Common myeloid progenitor, CD34-positive (primary cell): ENCODE measurements at regions of chr2 and their contacts with region 1.

Region 1: DNA sequence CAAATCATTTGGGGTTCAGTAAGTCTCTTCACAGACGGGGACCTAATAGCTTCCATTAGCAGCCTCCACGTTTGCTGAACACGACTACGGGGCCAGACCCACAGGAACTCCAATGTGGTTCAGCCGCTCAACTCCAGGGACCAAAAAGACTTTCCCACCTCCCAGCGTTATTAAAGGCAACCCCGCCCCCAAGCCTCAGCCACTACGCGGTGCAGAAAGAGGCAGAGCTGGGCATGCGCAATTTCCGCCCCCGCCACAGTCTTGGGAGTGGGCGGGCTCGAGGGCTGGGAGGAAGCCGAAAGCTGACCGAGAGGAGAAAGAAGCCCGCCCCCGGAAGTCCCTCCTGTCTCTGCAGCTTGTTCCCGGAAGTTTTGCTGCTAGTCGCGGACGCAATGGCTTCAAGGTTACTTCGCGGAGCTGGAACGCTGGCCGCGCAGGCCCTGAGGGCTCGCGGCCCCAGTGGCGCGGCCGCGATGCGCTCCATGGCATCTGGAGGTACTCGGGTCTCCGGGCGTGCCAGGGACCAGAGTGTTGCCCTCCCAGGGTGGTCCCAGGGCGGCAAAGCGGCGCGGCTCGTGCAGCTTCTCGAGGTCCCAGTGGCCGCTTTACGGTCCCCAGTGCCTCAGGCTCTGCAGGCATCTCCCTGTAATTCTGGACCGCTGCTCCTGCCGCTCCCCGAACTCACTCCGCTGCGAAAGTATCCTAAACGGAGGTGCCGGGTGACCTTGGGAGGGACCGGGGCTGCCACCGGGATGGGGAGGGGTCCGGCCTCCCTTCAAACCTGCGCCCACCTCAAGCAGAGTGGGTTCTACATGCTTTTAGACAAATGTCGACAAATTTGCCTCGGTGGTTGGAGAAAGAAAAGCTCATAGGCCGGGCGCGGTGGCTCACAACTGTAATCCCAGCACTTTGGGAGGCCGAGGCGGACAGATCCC is at the start of gene COX5B:
- DNase-seq: peak; percentile 97 to 99 (median 98)
- H3K4me3 ChIP-seq: peak within 1 kb of the TSS; percentile 74 to 99 (median 95)
- H3K27ac ChIP-seq: peak within 1 kb of the TSS; percentile 82 to 92
- H3K4me1 ChIP-seq: peaks cover 3 to 22% (median 18%) of the 10 kb centered on the region in 4 experiments
- H3K27me3 ChIP-seq: no peaks in the 10 kb centered on the region

Region 2: GRCh38 chr2:97663965-97664635 is 18.1 kb after region 1 on chr2 and contains the start of gene ACTR1B:
- CTCF ChIA-PET with region 1: interaction called, 85 read pairs
- POLR2A ChIA-PET with region 1: interaction called, 51 read pairs
- DNase-seq: peak; percentile 98 to 99 (median 99)
- H3K4me3 ChIP-seq: peak within 1 kb of the TSS; percentile 72 to 95 (median 77)
- H3K27ac ChIP-seq: peak within 1 kb of the TSS; percentile 91 to 98
- H3K4me1 ChIP-seq: peaks cover 3 to 36% (median 32%) of the 10 kb centered on the region in 4 experiments
- H3K27me3 ChIP-seq: no peaks in the 10 kb centered on the region

Region 3: GRCh38 chr2:98108110-98108509 is 462.1 kb after region 1 on chr2:
- CTCF ChIA-PET with region 1: no interaction called
- POLR2A ChIA-PET with region 1: no interaction called
- DNase-seq: no peak
- H3K4me3 ChIP-seq: no peak overlapping the region
- H3K27ac ChIP-seq: no peak overlapping the region
- H3K4me1 ChIP-seq: no peaks in the 10 kb centered on the region
- H3K27me3 ChIP-seq: no peaks in the 10 kb centered on the region